ENCODE measurements at regions of chr16 and their contacts with region 1.

Region 1: GRCh38 chr16:30615358-30616091 is 5.3 kb upstream of the ZNF689 start:
- DNase-seq: peak; percentile 98
- ATAC-seq: peak; percentile 90
- H3K4me3 Mint-ChIP-seq: no peak overlapping the region
- H3K27ac Mint-ChIP-seq: no peak overlapping the region
- H3K4me1 Mint-ChIP-seq: peaks cover 1% of the 10 kb centered on the region; the same call in 1 of the 2 replicates
- H3K27me3 Mint-ChIP-seq: peaks cover 17% of the 10 kb centered on the region
- CTCF ChIP-seq: peak; percentile 99

Region 2: DNA sequence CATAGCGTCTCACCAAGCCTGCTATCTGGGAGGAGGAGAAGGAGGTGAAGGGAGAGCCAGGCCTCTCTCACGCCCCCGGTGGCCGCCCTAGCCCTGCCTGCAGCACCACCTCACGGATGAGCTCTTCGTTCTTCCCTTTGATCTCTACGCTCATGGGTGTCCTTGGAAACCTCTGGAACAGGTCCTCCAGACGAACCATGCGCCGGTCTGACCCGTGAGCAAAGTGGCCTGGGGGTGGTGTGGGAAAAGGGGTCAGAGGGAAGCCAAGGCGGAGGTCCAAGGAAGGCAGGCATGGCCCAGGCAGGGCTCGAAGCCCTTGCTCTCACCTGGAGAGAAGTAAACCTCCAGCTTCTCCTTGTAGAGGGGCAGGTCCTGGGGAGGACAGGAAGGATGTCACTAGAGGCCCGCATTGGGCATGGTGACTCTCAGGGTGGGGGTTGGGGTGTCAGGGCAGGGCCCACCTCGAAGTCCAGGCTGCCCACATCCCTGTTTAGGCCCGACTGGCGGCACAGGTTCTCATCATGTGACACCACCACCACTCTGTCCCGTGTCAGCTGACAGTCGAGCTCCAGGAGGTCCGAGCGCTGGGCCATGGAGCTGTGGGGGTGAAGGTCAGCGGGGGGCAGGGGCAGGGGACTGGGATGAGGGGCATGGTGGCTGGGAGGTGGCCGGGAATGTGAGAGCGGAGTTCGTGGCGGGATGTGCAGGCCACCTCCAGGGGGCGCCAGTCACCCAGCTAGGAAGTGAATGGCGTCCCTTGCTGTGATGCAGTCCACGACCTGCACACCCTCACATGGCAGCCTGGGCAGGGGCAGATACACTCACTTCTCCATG is 503.1 kb before region 1 on chr16:
- CTCF ChIA-PET with region 1: interaction called, 13 read pairs
- POLR2A ChIA-PET with region 1: no interaction called
- DNase-seq: peak; percentile 82
- ATAC-seq: peak; percentile 83
- H3K4me3 Mint-ChIP-seq: no peak overlapping the region
- H3K27ac Mint-ChIP-seq: no peak overlapping the region
- H3K4me1 Mint-ChIP-seq: peaks cover 3% of the 10 kb centered on the region
- H3K27me3 Mint-ChIP-seq: no peaks in the 10 kb centered on the region
- CTCF ChIP-seq: peak; percentile 90

Region 3: DNA sequence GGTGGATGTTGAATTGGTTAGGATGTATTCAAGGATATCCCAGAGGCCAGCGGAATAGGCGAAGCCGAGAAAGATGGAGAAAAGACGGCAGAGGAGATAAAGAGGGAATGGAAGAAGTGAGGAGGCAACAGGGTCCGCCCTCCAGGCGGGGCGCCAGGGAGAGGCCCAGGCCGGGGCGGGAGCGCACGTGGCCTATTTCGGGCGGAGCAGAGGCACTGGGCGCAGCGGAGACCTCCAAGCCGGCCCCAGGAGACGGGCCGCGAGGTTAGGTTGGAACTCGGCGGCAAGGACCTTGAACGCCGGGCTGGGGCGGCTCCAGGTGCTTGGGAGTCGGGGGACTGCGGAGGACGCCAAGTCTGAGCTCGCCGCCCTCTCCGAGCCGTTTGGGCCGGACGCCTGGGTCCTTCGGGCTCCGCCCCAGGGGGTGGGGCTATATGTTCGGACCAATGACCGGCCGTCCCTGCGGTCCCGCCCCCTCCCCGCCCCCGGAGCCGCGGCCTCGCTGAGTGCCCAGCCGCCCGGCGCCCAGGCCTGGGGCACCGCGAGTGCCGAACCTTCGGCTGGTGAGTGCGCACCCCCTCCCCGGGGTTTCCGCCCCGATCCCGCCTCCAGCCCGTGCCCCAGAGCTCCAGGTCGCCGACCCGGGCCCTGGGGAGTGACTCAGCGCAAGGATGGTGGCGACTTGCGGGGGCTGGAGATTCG is 208.3 kb before region 1 on chr16 and contains the start of gene ZNF771:
- CTCF ChIA-PET with region 1: interaction called, 34 read pairs
- POLR2A ChIA-PET with region 1: interaction called, 3 read pairs
- DNase-seq: peak; percentile 96
- ATAC-seq: peak; percentile 84
- H3K4me3 Mint-ChIP-seq: peak within 1 kb of the TSS; percentile 90
- H3K27ac Mint-ChIP-seq: peak within 1 kb of the TSS; percentile 93
- H3K4me1 Mint-ChIP-seq: peaks cover 20% of the 10 kb centered on the region
- H3K27me3 Mint-ChIP-seq: peaks cover 21% of the 10 kb centered on the region
- CTCF ChIP-seq: no peak
- total RNA-seq, gene ZNF771: 10.0 to 12.5 TPM (median 11.3 TPM) in 3 replicates

Region 4: DNA sequence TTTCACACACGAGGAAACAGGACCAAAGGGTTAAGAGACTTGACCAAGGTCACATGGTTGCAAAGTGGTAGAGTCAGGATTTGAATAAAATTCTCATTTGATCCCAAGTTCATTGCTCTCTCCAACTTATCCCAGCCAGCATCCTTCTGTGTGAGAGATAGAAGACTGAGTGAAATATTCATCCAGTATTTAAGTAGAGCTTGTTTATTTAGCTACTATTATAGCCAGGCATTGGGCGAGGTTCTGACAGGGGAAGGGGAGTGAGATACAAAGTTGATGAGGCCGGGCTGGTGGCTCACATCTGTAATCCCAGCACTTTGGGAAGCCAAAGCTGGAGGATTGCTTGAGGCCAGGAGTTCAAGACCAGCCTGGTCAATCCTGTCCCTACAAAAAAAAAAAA is 138.5 kb before region 1 on chr16:
- CTCF ChIA-PET with region 1: interaction called, 10 read pairs
- POLR2A ChIA-PET with region 1: no interaction called
- DNase-seq: no peak
- ATAC-seq: no peak
- H3K4me3 Mint-ChIP-seq: no peak overlapping the region
- H3K27ac Mint-ChIP-seq: no peak overlapping the region
- H3K4me1 Mint-ChIP-seq: no peaks in the 10 kb centered on the region
- H3K27me3 Mint-ChIP-seq: peaks cover 23% of the 10 kb centered on the region
- CTCF ChIP-seq: no peak

Region 5: DNA sequence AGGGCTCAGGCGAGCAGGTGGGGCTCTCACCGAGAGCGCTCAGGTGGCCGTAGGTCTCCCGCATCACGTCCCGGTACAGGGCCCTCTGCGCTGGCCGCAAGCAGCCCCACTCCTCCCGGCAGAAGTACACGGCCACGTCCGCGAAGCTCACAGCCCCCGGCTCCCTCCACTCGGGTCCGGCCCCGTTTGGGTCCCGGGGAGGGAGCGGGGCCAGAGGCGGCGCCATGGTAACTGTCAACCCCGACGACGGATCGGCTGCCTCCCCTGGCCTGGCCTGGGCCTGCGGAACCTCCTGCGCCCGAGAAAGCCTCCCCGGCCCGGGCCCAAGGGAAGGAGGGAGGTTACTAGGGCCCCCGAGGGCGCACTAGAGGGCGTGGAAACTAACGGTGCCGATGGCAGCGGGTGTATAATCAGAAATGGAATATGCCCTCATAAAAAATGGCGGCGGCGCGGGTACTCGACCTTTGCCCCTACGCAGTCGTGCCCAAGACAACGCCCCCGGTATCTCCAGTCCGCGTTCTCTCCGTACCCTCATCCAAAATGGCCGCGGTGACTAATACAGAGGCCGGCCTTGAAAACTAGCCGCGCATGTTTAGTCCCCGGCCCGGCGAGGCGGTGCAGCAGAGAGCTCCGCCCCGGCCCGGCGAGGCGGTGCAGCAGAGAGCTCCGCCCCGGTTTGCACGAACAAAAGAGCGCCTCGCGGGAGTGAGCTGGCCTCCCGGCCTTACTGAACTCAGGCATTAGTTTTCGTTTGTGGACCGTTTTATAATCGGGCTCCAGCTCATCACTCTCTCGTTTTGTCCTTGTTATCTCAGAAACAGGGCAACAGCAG is 57.4 kb before region 1 on chr16 and contains the start of gene ZNF764:
- CTCF ChIA-PET with region 1: interaction called, 23 read pairs
- POLR2A ChIA-PET with region 1: interaction called, 3 read pairs
- DNase-seq: peak; percentile 96
- ATAC-seq: peak; percentile 94
- H3K4me3 Mint-ChIP-seq: peak within 1 kb of the TSS; percentile 77
- H3K27ac Mint-ChIP-seq: peak within 1 kb of the TSS; percentile 98
- H3K4me1 Mint-ChIP-seq: peaks cover 29% of the 10 kb centered on the region
- H3K27me3 Mint-ChIP-seq: peaks cover 17% of the 10 kb centered on the region
- CTCF ChIP-seq: no peak
- total RNA-seq, gene ZNF764: 9.0 to 10.4 TPM (median 9.1 TPM) in 3 replicates

Region 6: GRCh38 chr16:30628627-30629540 is 13.4 kb after region 1 on chr16:
- CTCF ChIA-PET with region 1: interaction called, 58 read pairs
- POLR2A ChIA-PET with region 1: no interaction called
- DNase-seq: peak; percentile 94
- ATAC-seq: peak; percentile 95
- H3K4me3 Mint-ChIP-seq: no peak overlapping the region
- H3K27ac Mint-ChIP-seq: no peak overlapping the region
- H3K4me1 Mint-ChIP-seq: 0 out of 2 replicates have a peak, but pooled peaks cover 2% of the 10 kb centered on the region
- H3K27me3 Mint-ChIP-seq: peaks cover 23% of the 10 kb centered on the region
- CTCF ChIP-seq: peak; percentile 71

Measured in WTC11 (cell line).